ENCODE measurements at regions of chr7 and their contacts with region 1.

Region 1: DNA sequence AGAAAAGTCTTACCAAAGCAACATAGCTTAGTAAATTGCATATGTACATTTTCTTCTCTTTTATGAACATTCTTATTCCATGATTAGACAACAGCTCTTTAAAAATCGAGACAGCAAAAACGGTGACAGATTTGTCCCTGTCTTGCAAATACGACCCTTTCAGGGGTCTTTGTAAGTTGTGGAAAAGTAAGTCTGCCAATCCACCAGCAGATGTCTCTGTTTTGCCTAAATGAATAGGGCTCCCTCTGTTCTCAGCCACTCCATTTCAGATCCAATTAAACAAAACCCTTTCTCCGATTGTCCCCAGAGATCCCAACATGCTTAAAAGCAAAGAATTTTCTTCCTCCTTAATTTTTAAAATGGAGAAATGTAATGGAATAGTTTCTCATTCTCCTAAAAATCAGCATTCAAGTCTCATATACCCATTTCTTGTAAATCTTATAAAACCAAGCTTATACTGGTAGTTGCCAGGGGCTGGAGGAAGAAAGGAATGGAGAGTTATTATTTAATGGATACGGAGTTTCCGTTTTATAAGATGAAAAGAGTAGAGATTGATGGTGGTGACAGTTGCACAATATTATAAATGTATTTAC is 61.0 kb upstream of the NFE2L3 start:
- DNase-seq: peak; percentile 20
- ATAC-seq: peak; percentile 59
- H3K4me3 Mint-ChIP-seq: peak overlapping the region; percentile 1
- H3K27ac Mint-ChIP-seq: peak overlapping the region; percentile 33
- H3K4me1 Mint-ChIP-seq: peaks cover 20% of the 10 kb centered on the region
- H3K27me3 Mint-ChIP-seq: no peaks in the 10 kb centered on the region
- CTCF ChIP-seq: peak; percentile 78

Region 2: GRCh38 chr7:25894902-25895791 is 195.9 kb before region 1 on chr7:
- CTCF ChIA-PET with region 1: interaction called, 47 read pairs
- POLR2A ChIA-PET with region 1: no interaction called
- intact Hi-C with region 1: no loop called
- DNase-seq: peak; percentile 72
- ATAC-seq: peak; percentile 71
- H3K4me3 Mint-ChIP-seq: peak overlapping the region; percentile 4
- H3K27ac Mint-ChIP-seq: no peak overlapping the region
- H3K4me1 Mint-ChIP-seq: peaks cover 27% of the 10 kb centered on the region
- H3K27me3 Mint-ChIP-seq: peaks cover 8% of the 10 kb centered on the region
- CTCF ChIP-seq: peak; percentile 73

Region 3: DNA sequence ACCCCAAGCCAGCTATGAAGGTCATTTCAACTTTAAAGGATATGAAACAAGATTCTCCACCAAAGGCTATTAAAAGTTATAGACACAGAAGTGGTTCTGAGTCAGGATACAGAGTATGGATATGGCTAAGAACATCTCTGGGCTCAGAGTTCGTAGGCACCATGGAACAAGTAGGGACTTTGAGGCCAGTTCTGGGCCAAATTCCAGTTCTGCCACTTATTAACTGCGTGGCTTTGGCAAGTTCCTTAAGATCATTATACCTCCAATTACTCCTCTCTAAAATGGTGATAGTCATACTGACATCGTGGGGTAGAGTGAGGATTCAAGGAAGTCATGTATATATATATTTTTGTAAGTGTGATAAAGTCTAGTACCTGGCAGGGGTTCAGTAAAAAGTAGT is 44.9 kb before region 1 on chr7:
- CTCF ChIA-PET with region 1: no interaction called
- POLR2A ChIA-PET with region 1: no interaction called
- intact Hi-C with region 1: no loop called
- DNase-seq: no peak
- ATAC-seq: no peak
- H3K4me3 Mint-ChIP-seq: no peak overlapping the region
- H3K27ac Mint-ChIP-seq: no peak overlapping the region
- H3K4me1 Mint-ChIP-seq: no peaks in the 10 kb centered on the region
- H3K27me3 Mint-ChIP-seq: peaks cover 24% of the 10 kb centered on the region
- CTCF ChIP-seq: no peak

Region 4: DNA sequence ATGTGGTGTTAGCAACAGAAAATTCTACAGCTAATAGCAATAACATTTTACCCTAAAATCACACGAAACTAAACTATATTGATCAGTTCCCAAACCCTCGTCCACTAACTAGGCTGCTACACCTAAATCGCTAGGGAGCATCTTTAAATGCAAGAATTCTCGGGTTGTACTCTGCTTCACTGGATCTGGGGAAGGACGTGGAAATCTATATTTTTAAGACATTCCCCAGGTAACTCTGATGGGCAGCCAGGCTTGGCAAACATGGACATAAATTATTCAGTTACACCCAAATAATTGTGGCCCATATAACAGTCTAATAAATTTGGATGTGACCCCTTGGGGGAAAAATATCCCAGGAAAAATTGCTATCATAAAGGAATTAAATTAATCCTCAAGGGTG is 24.6 kb after region 1 on chr7:
- CTCF ChIA-PET with region 1: interaction called, 13 read pairs
- POLR2A ChIA-PET with region 1: no interaction called
- intact Hi-C with region 1: no loop called
- DNase-seq: no peak
- ATAC-seq: no peak
- H3K4me3 Mint-ChIP-seq: no peak overlapping the region
- H3K27ac Mint-ChIP-seq: no peak overlapping the region
- H3K4me1 Mint-ChIP-seq: peaks cover 4% of the 10 kb centered on the region
- H3K27me3 Mint-ChIP-seq: no peaks in the 10 kb centered on the region
- CTCF ChIP-seq: no peak

Region 5: DNA sequence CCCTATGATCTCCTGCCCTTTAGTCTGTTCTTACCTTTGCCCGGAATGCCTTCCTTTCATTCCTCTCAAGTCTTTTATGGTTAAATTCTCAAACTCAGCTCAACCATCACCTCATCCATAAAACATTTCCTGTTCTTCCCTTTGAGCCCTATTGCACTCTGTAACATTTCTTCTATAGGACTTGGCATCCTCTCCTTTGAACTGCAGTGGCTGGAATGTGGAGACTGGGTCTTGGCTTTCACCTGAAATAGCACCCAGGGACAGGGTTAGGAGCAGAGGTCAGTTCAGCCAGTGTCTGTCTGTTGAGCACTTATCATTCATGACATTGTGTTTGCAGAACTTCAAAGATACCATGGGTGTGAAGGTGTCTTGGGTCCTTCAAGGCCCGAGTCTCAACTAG is 68.2 kb after region 1 on chr7:
- CTCF ChIA-PET with region 1: interaction called, 21 read pairs
- POLR2A ChIA-PET with region 1: interaction called, 3 read pairs
- intact Hi-C with region 1: loop called (anchors 5 kb)
- DNase-seq: no peak
- ATAC-seq: no peak
- H3K4me3 Mint-ChIP-seq: no peak overlapping the region
- H3K27ac Mint-ChIP-seq: peak overlapping the region; percentile 44
- H3K4me1 Mint-ChIP-seq: peaks cover 88% of the 10 kb centered on the region
- H3K27me3 Mint-ChIP-seq: no peaks in the 10 kb centered on the region
- CTCF ChIP-seq: no peak

Region 6: DNA sequence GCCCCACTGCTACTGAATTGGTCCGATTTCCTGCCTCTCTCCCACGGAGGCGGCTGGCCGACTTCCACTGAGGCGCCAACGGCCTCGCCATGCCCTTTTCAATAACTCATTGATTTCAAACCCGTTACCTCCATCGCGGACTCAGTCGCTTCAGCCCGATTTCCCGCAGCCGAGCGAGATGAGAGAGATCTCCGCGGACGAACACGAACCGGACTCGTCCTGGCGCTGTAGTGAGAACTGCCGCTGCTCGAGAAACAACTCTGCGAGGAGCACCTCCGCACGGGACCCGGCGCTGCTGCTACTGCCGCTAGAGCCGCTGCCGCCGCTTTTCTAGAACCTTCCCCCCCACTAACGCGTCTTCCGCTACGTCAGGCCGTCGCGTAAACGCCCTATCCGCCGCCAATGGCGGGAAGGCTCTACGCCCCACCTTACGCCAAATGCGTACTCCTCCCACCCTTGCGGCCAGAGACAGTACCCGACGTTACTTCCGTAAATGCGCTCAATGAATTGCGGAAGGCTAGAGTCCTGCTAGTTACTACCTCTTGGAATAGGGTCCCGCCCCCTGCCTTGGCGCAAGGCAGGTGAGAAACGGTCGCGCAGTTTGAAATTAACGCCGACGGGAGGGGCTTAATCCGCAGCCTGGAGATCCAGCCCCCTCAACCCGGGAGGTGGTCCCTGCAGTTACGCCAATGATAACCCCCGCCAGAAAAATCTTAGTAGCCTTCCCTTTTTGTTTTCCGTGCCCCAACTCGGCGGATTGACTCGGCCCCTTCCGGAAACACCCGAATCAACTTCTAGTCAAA is 109.6 kb after region 1 on chr7 and contains the start of gene HNRNPA2B1:
- CTCF ChIA-PET with region 1: interaction called, 141 read pairs
- POLR2A ChIA-PET with region 1: interaction called, 85 read pairs
- intact Hi-C with region 1: no loop called
- DNase-seq: peak; percentile 98
- ATAC-seq: peak; percentile 73
- H3K4me3 Mint-ChIP-seq: peak within 1 kb of the TSS; percentile 100
- H3K27ac Mint-ChIP-seq: peak within 1 kb of the TSS; percentile 100
- H3K4me1 Mint-ChIP-seq: peaks cover 32% of the 10 kb centered on the region
- H3K27me3 Mint-ChIP-seq: peaks cover 3% of the 10 kb centered on the region
- CTCF ChIP-seq: no peak
- total RNA-seq, gene HNRNPA2B1: 871 to 893 TPM

Region 7: DNA sequence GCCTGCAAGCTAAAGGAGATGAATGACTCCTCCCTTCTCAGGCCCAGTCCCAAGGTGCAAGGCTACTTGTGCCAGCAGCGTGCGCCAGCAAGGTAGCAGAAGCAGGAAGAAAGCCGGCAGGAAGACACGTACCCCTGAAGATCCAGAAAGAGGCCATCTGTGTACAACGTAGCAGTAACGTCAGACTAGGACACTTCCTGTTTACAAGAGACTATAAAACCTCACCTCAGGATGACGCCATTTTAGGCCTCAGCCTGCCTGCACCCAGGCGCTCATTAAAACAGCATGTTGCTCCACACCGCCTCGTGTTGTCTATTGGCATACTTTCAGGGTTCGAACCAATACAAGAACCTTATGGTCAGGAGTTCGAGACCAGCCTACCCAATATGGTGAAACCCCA is 159.2 kb after region 1 on chr7:
- CTCF ChIA-PET with region 1: no interaction called
- POLR2A ChIA-PET with region 1: no interaction called
- intact Hi-C with region 1: no loop called
- DNase-seq: no peak
- ATAC-seq: no peak
- H3K4me3 Mint-ChIP-seq: no peak overlapping the region
- H3K27ac Mint-ChIP-seq: no peak overlapping the region
- H3K4me1 Mint-ChIP-seq: no peaks in the 10 kb centered on the region
- H3K27me3 Mint-ChIP-seq: no peaks in the 10 kb centered on the region
- CTCF ChIP-seq: no peak

Region 8: GRCh38 chr7:26346611-26347203 is 255.7 kb after region 1 on chr7:
- CTCF ChIA-PET with region 1: interaction called, 11 read pairs
- POLR2A ChIA-PET with region 1: no interaction called
- intact Hi-C with region 1: no loop called
- DNase-seq: no peak
- ATAC-seq: peak; percentile 70
- H3K4me3 Mint-ChIP-seq: no peak overlapping the region
- H3K27ac Mint-ChIP-seq: no peak overlapping the region
- H3K4me1 Mint-ChIP-seq: peaks cover 4% of the 10 kb centered on the region
- H3K27me3 Mint-ChIP-seq: no peaks in the 10 kb centered on the region
- CTCF ChIP-seq: no peak